GM18951 (cell line): ENCODE measurements at regions of chr1 and their contacts with region 1.

Region 1: GRCh38 chr1:150613061-150613920 is 16.1 kb downstream of the ENSA start:
- POLR2A ChIP-seq: no peak

Region 2: DNA sequence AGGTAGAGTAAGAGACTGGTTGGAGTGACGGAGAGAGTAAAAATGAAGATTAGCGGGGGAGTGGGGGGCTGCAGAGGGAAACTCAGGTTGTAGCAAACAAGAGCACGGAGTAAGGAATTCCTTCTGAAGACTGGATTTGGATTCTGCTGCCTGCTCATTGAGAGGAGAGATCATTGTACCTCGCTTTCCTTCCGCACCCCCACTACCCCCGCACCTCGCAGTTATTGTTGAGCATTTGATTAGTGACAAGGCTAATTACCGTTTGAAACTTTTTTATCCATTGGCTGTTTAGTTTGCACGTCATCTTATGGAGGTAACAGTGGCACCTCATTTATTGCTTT is 291.5 kb before region 1 on chr1:
- in situ Hi-C with region 1: no loop called
- POLR2A ChIP-seq: no peak

Region 3: DNA sequence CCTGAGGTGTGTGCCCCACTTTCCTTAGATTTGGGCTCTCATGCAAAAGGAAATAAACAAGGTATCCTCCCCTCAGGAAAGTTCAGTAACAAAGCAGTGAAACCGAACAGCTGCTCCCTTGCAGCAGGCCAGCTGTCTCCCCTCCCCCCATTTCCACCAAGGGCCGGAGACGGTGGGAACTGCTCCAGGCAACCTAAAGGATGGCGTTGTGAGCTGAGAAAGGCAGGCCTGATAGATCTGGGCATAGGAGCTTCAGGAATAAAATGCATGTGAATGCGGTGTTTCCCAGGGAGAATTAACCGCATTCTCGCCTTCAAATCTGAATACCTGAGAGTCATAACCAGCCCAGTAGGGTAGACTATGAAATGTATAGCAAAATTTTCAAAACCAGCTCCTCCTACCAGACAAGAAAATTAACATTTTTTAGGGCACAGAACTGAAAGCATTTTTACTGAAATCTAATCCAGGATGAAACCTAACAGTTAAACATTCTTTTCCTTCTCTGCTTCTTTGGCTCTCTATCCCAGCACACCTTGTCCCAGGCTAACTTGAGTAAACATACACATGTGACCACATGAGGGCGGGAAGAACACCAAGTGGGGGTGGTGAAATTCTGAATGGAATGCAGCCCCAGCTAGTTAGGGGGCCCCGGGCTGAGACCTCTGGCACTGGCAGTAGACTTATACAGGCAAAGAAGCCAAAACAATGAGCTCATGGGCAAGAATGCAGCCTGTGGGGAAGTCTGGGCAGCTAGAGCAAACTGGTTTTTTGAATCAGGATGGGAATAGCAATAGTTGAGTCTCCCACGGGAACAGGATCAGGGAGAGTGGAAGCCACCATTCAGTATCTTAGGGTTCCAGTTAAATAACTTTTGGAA is 45.3 kb before region 1 on chr1:
- in situ Hi-C with region 1: loop called (anchors 5 kb)
- POLR2A ChIP-seq: no peak